Dorsolateral prefrontal cortex (tissue), 120 donors: ENCODE measurements at regions of chr4 and their contacts with region 1.

Region 1: GRCh38 chr4:42562016-42562415 is 94.9 kb downstream of the ATP8A1 start:
- DNase-seq: no peak
- H3K4me3 ChIP-seq: no peak overlapping the region
- H3K27ac ChIP-seq: no peak overlapping the region
- H3K27me3 ChIP-seq: no peaks in the 10 kb centered on the region
- CTCF ChIP-seq: no peak

Region 2: GRCh38 chr4:42865572-42866189 is 303.7 kb after region 1 on chr4:
- intact Hi-C with region 1: loop called in 1 of 2 experiments (anchors 5 kb)
- DNase-seq: peak in 4 of 10 donors; percentile 21 to 75 (median 40)
- H3K4me3 ChIP-seq: no peak overlapping the region
- H3K27ac ChIP-seq: no peak overlapping the region
- H3K27me3 ChIP-seq: no peaks in the 10 kb centered on the region
- CTCF ChIP-seq: peak; percentile 60 to 94 (median 82)